ENCODE measurements at regions of chr9 and their contacts with region 1.

Region 1: GRCh38 chr9:91036826-91037510 is 235.3 kb downstream of the SYK start:
- DNase-seq: peak; percentile 78 to 80 (median 79)
- ATAC-seq: peak; percentile 90
- H3K4me3 ChIP-seq: no peak overlapping the region
- H3K4me1 ChIP-seq: peaks cover 21% of the 10 kb centered on the region
- CTCF ChIP-seq: peak; percentile 42

Region 2: GRCh38 chr9:91422758-91423711 is 386.1 kb after region 1 on chr9:
- intact Hi-C with region 1: loop called in 1 of 2 experiments (anchors 10 kb)
- DNase-seq: peak; percentile 75 to 78 (median 75)
- ATAC-seq: peak; percentile 28
- H3K4me3 ChIP-seq: peak overlapping the region; percentile 48
- H3K4me1 ChIP-seq: peaks cover 27% of the 10 kb centered on the region
- CTCF ChIP-seq: no peak

Region 3: GRCh38 chr9:91433180-91433579 is 396.2 kb after region 1 on chr9:
- intact Hi-C with region 1: loop called (anchors 5 to 10 kb)
- DNase-seq: peak in 1 of 3 donors; percentile 37
- ATAC-seq: peak; percentile 95
- H3K4me3 ChIP-seq: no peak overlapping the region
- H3K4me1 ChIP-seq: no peaks in the 10 kb centered on the region
- CTCF ChIP-seq: peak; percentile 6

Measured in mucosa of descending colon (tissue), 3 donors.